B cell (primary cell): ENCODE measurements at regions of chr3 and their contacts with region 1.

Region 1: DNA sequence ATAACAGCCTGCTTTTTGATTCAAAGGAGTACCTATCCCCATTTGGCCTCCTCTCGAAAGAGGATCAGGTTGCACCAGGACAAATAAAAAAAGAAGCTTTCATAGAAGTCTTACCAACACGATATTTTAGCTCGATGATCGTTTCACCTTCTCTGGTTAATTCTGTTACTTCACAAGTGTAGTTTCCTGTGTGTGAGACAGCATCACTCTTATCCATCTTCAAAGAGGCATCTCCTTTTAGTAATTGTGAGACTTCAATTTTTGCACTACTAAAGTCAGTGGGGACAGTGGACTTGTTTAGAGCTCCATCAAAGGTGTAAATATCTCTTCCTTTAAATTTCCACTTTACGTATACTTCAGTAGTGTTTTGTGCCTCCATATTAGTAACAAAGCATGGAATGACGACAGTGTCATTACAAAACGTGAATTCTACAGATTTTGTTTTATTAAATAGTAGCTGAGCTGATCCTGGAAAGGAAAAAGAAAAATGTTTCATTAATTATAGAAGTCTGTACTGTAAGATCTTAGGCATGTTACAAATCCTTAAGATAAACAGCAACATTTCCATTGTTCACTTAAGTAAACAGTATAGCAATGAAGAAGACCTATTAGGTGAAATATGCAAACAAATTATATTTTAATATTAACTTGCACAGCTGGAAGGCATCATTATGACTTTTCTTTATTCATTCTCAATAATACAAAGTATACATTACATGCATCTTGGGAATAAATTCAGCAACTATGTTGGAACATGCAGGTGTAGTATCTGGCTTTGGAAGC is 10.8 kb downstream of the CD47 start:
- DNase-seq: no peak
- ATAC-seq: no peak
- H3K4me3 ChIP-seq: no peak overlapping the region
- H3K4me3 Mint-ChIP-seq: peak overlapping the region; percentile 6
- H3K27ac ChIP-seq: peak overlapping the region in 1 of 2 donors; percentile 67
- H3K27ac Mint-ChIP-seq: peak overlapping the region; percentile 42
- H3K4me1 ChIP-seq: peaks cover 46 to 84% of the 10 kb centered on the region in 2 donors
- H3K4me1 Mint-ChIP-seq: peaks cover 52% of the 10 kb centered on the region
- H3K27me3 ChIP-seq: no peaks in the 10 kb centered on the region
- H3K27me3 Mint-ChIP-seq: no peaks in the 10 kb centered on the region
- CTCF ChIP-seq: no peak

Region 2: DNA sequence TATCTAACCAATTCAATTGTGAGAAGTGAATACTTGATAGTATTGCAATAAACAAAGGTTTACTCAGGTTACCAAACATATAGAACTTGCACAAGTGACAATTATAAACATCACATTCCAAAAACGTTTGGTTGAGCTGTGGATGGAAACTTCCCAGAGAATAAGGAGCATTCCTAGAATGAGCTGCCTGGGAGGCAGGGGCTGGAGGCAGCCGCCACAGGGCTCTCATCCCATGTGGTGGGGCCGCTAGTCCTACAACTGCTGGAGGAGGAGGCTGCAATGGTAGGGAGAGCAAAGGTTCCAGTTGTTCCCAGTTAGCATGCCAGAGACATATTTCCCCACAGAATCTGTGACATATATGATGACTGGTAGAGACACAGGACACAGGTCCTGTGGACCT is 39.6 kb before region 1 on chr3:
- CTCF ChIA-PET with region 1: no interaction called
- POLR2A ChIA-PET with region 1: no interaction called
- intact Hi-C with region 1: loop called (anchors 5 kb)
- DNase-seq: no peak
- ATAC-seq: no peak
- H3K4me3 ChIP-seq: no peak overlapping the region
- H3K4me3 Mint-ChIP-seq: no peak overlapping the region
- H3K27ac ChIP-seq: no peak overlapping the region
- H3K27ac Mint-ChIP-seq: no peak overlapping the region
- H3K4me1 ChIP-seq: peaks cover 20% of the 10 kb centered on the region in 2 donors
- H3K4me1 Mint-ChIP-seq: peaks cover 30% of the 10 kb centered on the region
- H3K27me3 ChIP-seq: no peaks in the 10 kb centered on the region
- H3K27me3 Mint-ChIP-seq: no peaks in the 10 kb centered on the region
- CTCF ChIP-seq: no peak